Head of caudate nucleus (tissue), 42 donors: ENCODE measurements at regions of chr1 and their contacts with region 1.

Region 1: DNA sequence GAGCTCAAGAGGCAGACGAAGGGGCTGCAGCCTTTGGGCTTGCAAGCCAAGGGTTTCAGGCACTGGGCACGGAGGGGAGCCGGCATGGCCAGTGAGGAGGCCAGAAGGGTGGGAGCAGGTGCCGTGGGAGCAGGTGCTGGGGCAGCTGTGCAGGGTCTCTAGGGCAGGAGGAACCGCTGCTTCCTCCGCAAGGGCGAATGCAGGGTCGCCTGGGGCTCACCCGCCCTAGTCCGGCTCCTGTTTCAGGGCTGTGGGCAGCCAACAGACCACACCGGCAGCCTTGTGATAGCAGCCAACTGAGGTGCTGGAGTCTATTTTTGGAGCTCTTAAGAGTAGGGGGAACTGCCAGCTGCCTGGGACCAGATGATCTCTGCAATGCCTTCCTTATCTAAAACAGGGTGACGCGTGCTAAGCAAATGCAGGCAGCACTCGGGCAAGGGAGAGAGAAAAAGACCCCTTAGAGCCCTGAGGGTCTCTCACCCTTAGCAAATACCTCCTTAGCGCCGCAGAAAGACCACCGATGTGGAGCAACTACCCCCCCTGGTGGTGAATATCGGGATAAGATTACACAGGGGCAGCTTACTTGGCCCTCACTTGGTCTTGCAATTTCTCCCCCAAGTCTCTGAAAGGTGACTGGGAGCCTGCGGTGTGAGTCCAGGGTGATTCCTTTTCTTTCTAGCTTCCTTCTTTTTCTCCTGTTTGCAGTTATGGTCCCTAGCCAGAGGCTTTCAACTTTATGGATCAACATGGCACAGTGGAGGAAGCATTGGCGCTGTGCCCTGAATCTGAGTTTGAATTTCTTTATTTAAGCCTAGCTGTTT is 20.7 kb upstream of the MAPKAPK2 start:
- DNase-seq: peak in 40 of 42 donors; percentile 17 to 91 (median 65)

Region 2: GRCh38 chr1:206679738-206680211 is 15.7 kb after region 1 on chr1:
- intact Hi-C with region 1: loop called (anchors 2 kb)
- DNase-seq: peak in 1 of 42 donors; percentile 13